ENCODE measurements at regions of chr11 and their contacts with region 1.

Region 1: GRCh38 chr11:75525596-75526541 is at the start of gene GDPD5:
- DNase-seq: peak; percentile 87
- H3K4me3 ChIP-seq: peak within 1 kb of the TSS; percentile 57 to 74 (median 68)
- H3K27ac ChIP-seq: peak within 1 kb of the TSS in 3 of 4 donors; percentile 1 to 52 (median 38)
- H3K4me1 ChIP-seq: peaks cover 12 to 18% (median 15%) of the 10 kb centered on the region in 4 donors
- H3K27me3 ChIP-seq: peaks cover 19% of the 10 kb centered on the region
- CTCF ChIP-seq: peak in 4 of 5 experiments; percentile 17 to 59 (median 36)
- EP300 ChIP-seq: no peak
- POLR2A ChIP-seq: peak; percentile 17
- total RNA-seq, gene GDPD5: 3.7 to 10.1 (median 7.1) TPM in 3 of 4 donors, not detected in the other

Region 2: GRCh38 chr11:75280227-75280701 is 245.6 kb before region 1 on chr11:
- in situ Hi-C with region 1: loop called in 3 of 4 experiments (anchors 25 kb)
- intact Hi-C with region 1: no loop called
- DNase-seq: peak; percentile 83
- H3K4me3 ChIP-seq: no peak overlapping the region
- H3K27ac ChIP-seq: peak overlapping the region in 3 of 4 donors; percentile 13 to 24 (median 18)
- H3K4me1 ChIP-seq: peaks cover 0 to 9% (median 3%) of the 10 kb centered on the region in 4 donors
- H3K27me3 ChIP-seq: no peaks in the 10 kb centered on the region
- CTCF ChIP-seq: peak; percentile 96 to 98 (median 98)
- EP300 ChIP-seq: no peak
- POLR2A ChIP-seq: no peak

Region 3: GRCh38 chr11:75445315-75445953 is 80.4 kb before region 1 on chr11:
- in situ Hi-C with region 1: loop called (anchors 5 to 25 kb)
- intact Hi-C with region 1: loop called (anchors 2 kb)
- DNase-seq: peak; percentile 77
- H3K4me3 ChIP-seq: no peak overlapping the region
- H3K27ac ChIP-seq: no peak overlapping the region
- H3K4me1 ChIP-seq: no peaks in the 10 kb centered on the region
- H3K27me3 ChIP-seq: no peaks in the 10 kb centered on the region
- CTCF ChIP-seq: peak; percentile 96 to 98 (median 96)
- EP300 ChIP-seq: no peak
- POLR2A ChIP-seq: no peak

Region 4: DNA sequence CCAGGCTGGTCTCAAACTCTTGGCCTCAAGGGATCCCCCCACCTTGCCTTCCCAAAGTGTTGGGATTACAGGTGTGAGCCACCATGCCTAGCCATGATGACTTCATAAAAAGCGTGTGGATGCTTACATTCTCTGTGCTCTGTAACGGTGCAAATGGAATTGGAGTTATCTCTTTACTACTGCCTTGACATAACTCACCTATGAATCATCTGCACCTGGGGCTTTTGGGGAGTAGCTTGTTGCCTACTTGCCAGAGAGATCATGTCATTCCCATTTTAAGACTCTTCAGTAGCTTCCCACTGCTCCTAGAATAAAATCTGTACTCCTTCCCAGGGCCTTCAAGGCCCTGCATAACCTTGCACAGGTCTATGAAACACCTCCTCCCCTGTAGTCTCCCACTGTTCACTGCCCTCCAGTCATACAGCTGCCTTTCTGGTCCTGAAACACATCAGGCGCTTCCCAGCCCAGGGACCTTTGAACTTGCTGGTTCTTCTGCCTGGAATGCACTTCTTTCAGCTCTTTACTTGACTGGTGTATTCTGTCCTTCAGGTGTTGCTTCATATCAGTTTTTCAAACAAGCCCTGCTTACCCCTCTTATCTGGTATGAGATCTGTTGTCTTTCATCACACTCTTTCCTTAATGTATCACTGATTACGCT is 172.2 kb after region 1 on chr11:
- in situ Hi-C with region 1: no loop called
- intact Hi-C with region 1: no loop called
- DNase-seq: no peak
- H3K4me3 ChIP-seq: no peak overlapping the region
- H3K27ac ChIP-seq: no peak overlapping the region
- H3K4me1 ChIP-seq: no peaks in the 10 kb centered on the region
- H3K27me3 ChIP-seq: no peaks in the 10 kb centered on the region
- CTCF ChIP-seq: no peak
- EP300 ChIP-seq: no peak
- POLR2A ChIP-seq: no peak

Region 5: GRCh38 chr11:75966546-75967287 is 440.8 kb after region 1 on chr11:
- in situ Hi-C with region 1: no loop called
- intact Hi-C with region 1: no loop called
- DNase-seq: no peak
- H3K4me3 ChIP-seq: no peak overlapping the region
- H3K27ac ChIP-seq: no peak overlapping the region
- H3K4me1 ChIP-seq: peaks cover 0 to 18% (median 0%) of the 10 kb centered on the region in 4 donors
- H3K27me3 ChIP-seq: no peaks in the 10 kb centered on the region
- CTCF ChIP-seq: no peak
- EP300 ChIP-seq: no peak
- POLR2A ChIP-seq: no peak

Measured in transverse colon (tissue), 4 donors.